ENCODE measurements at regions of chr6 and their contacts with region 1.

Region 1: GRCh38 chr6:153092082-153093013 is 38.7 kb downstream of the RGS17 start:
- DNase-seq: peak; percentile 81
- H3K4me3 ChIP-seq: peak overlapping the region in 1 of 3 experiments; percentile 21
- H3K27ac ChIP-seq: peak overlapping the region; percentile 78
- H3K4me1 ChIP-seq: peaks cover 39% of the 10 kb centered on the region
- H3K27me3 ChIP-seq: no peaks in the 10 kb centered on the region
- CTCF ChIP-seq: no peak
- POLR2A ChIP-seq: no peak

Region 2: DNA sequence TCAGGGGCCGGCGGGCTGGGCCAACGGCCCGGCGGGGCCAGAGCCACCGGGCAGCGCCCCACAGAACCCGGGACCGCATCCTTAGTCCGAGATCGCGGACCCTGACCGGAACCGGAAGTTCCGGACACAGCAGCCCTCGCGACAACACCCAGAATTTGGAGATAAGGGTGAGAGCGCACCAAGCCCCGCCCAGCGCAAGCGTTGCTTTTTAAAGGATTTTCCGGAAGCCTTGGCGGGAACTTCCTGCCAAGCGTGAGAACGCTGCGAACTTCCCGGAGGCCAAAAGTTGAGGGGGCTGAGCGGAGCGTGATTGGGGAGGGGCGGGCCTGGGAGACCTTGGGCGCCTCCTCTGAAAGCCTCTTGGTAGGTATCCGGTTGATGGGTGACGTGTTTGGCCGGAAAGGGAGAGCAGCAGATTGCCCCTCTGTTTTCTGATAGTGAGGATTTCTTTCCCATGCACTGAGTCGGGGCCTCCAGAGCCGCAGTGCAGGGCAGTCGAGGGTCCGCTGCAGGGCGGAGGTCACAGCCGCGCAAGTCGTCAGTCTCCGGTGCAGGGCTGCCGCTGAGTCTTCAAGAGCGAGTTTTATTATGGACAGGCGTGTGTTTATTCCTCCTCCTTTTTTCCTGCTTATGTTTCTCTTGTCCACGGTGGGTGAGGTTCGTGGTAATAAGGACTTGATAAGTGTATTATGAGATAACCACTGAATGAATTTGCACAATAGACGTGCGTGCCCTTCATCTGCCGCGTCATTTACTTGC is 89.6 kb before region 1 on chr6 and contains the start of gene MTRF1L:
- CTCF ChIA-PET with region 1: no interaction called
- POLR2A ChIA-PET with region 1: no interaction called
- dilution Hi-C with region 1: no loop called
- intact Hi-C with region 1: loop called (anchors 1 kb)
- DNase-seq: peak; percentile 97
- H3K4me3 ChIP-seq: peak within 1 kb of the TSS; percentile 72 to 96 (median 90)
- H3K27ac ChIP-seq: peak within 1 kb of the TSS; percentile 77
- H3K4me1 ChIP-seq: peaks cover 22% of the 10 kb centered on the region
- H3K27me3 ChIP-seq: no peaks in the 10 kb centered on the region
- CTCF ChIP-seq: no peak
- POLR2A ChIP-seq: peak; percentile 92
- total RNA-seq, gene MTRF1L: 27.5 and 31.2 TPM in 2 replicates

Region 3: GRCh38 chr6:153069897-153070296 is 22.5 kb before region 1 on chr6:
- CTCF ChIA-PET with region 1: no interaction called
- POLR2A ChIA-PET with region 1: no interaction called
- dilution Hi-C with region 1: no loop called
- intact Hi-C with region 1: no loop called
- DNase-seq: no peak
- H3K4me3 ChIP-seq: no peak overlapping the region
- H3K27ac ChIP-seq: no peak overlapping the region
- H3K4me1 ChIP-seq: no peaks in the 10 kb centered on the region
- H3K27me3 ChIP-seq: no peaks in the 10 kb centered on the region
- CTCF ChIP-seq: no peak
- POLR2A ChIP-seq: no peak

Region 4: DNA sequence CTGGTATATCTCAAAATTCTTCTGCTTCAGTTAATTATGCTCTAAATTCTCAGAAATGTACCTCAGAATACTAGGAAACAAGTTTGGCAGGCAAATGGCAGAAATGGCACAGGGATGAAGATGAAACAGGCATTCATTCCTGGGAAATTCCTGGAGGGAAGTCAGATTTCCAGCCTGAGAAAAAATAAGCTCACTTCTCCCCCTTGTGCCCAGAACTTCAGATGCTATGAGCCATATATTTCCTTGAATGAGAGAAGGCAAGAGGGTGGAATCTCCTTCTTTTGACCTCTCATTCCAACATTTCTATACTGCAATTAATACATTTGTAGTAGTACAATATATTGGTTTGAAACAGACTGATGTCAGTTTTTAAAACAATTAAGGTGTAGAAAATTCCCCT is 16.0 kb after region 1 on chr6:
- CTCF ChIA-PET with region 1: interaction called, 17 read pairs
- POLR2A ChIA-PET with region 1: interaction called, 3 read pairs
- dilution Hi-C with region 1: no loop called
- intact Hi-C with region 1: no loop called
- DNase-seq: peak; percentile 44
- H3K4me3 ChIP-seq: no peak overlapping the region
- H3K27ac ChIP-seq: no peak overlapping the region
- H3K4me1 ChIP-seq: no peaks in the 10 kb centered on the region
- H3K27me3 ChIP-seq: no peaks in the 10 kb centered on the region
- CTCF ChIP-seq: peak; percentile 38 to 43
- POLR2A ChIP-seq: no peak

Region 5: DNA sequence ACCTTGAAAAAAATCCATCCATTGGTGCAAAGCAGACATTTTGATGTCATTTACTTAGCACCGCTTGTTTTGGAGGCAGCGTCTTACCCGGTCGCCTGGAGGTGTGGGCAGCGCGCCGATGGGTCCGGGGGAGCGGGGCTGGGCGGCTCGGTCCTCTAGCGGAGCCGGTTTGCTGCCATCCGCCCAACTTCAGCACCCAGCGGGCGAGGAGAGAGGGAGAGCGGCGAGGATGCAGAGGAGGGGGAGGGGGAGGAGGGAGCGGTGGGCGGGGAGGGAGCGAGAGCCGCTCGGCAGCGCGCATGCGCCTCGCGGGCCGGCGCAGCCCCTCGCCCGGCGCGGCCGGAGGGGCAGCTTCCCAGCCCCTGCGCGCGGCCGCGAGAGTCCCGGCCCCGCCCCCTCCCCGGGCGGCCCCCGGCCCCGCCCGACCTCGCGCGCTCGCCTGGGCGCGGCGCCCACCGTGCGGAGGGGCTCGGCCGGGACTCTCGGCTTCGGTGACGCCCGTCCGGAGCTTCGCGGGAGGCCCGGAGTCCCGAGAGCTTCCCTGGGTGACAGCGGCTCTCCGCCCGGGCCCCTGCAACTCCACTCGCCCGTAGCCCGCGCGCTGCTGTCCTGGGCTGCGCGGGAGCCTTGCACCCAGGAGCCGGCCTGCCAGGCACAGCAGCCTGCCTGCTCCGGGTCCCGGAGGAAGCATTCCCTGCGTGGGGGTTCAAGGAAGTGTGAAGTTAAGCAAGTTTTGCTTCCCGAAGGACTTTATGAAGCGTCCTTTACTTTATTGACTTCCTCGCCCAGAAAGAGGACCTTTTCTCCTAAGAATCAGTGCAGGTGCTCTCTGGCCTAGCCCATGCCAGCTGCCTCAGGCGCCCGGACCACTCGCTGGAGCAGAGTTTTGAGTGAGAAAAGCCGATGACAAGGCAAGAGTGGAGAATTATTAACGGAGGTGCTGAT is 39.0 kb after region 1 on chr6 and contains the start of gene RGS17:
- CTCF ChIA-PET with region 1: interaction called, 3 read pairs
- POLR2A ChIA-PET with region 1: no interaction called
- dilution Hi-C with region 1: no loop called
- intact Hi-C with region 1: loop called (anchors 1 kb)
- DNase-seq: peak; percentile 57
- H3K4me3 ChIP-seq: peak within 1 kb of the TSS; percentile 69 to 76 (median 70)
- H3K27ac ChIP-seq: peak within 1 kb of the TSS; percentile 8
- H3K4me1 ChIP-seq: peaks cover 14% of the 10 kb centered on the region
- H3K27me3 ChIP-seq: peaks cover 9 to 15% of the 10 kb centered on the region in 2 experiments
- CTCF ChIP-seq: no peak
- POLR2A ChIP-seq: no peak
- total RNA-seq, gene RGS17: 1.1 and 2.3 TPM in 2 replicates

Region 6: DNA sequence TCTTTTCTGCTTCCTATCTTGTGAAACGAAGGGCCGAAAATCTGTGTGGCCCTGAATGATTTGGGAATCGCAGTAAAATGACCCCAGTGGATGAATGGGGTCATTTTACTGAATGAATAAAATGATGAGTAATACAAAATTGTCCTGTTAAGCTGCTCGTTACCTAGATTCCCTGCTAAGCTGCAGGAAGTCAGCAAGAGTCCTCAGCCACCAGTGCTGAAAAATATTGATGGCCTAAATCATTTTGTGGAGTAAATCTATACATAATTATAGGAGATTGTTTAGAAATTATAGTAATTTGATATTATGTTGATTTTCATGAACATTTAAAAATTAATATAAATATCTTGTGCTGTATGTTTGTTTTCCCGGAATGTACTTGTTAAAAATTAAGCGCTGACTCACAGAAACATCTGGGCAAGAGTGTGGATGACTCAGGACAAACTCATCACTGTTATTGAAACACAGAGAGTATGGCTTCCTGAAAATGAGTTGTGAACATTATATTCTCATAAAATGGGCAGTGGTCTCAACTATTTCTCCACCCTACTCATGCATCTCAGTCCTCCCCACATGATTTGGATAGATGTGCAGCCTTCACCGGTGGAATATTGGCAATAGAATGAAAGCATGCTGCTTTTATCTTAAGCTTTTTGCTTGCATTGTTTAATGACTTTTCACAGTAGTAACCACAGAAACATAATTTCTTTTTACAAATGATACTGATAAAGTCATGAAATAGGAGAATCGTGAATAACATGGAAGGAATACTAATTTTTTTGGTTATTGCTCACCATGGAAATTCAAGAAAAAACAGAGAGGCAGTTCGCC is 74.9 kb after region 1 on chr6:
- CTCF ChIA-PET with region 1: no interaction called
- POLR2A ChIA-PET with region 1: no interaction called
- dilution Hi-C with region 1: no loop called
- intact Hi-C with region 1: loop called (anchors 1 kb)
- DNase-seq: peak; percentile 79
- H3K4me3 ChIP-seq: no peak overlapping the region
- H3K27ac ChIP-seq: peak overlapping the region; percentile 75
- H3K4me1 ChIP-seq: peaks cover 19% of the 10 kb centered on the region
- H3K27me3 ChIP-seq: no peaks in the 10 kb centered on the region
- CTCF ChIP-seq: no peak
- POLR2A ChIP-seq: no peak